Stomach (tissue), 19 donors: ENCODE measurements at regions of chr9 and their contacts with region 1.

Region 1: GRCh38 chr9:123349691-123350480 is 6.1 kb upstream of the CRB2 start:
- DNase-seq: peak; percentile 47 to 84
- H3K4me3 ChIP-seq: no peak overlapping the region
- H3K27ac ChIP-seq: no peak overlapping the region
- H3K4me1 ChIP-seq: peaks cover 0 to 16% (median 14%) of the 10 kb centered on the region in 4 donors
- H3K27me3 ChIP-seq: peaks cover 0 to 39% (median 14%) of the 10 kb centered on the region in 3 donors
- CTCF ChIP-seq: peak in 5 of 7 experiments; percentile 74 to 96 (median 91)
- EP300 ChIP-seq: no peak
- POLR2A ChIP-seq: no peak

Region 2: GRCh38 chr9:123102375-123103110 is 247.3 kb before region 1 on chr9:
- intact Hi-C with region 1: loop called (anchors 10 kb)
- DNase-seq: no peak
- H3K4me3 ChIP-seq: no peak overlapping the region
- H3K27ac ChIP-seq: no peak overlapping the region
- H3K4me1 ChIP-seq: peaks cover 0 to 8% (median 0%) of the 10 kb centered on the region in 4 donors
- H3K27me3 ChIP-seq: no peaks in the 10 kb centered on the region
- CTCF ChIP-seq: no peak
- EP300 ChIP-seq: no peak
- POLR2A ChIP-seq: no peak

Region 3: GRCh38 chr9:124174433-124174832 is 824.5 kb after region 1 on chr9:
- intact Hi-C with region 1: no loop called
- DNase-seq: no peak
- H3K4me3 ChIP-seq: no peak overlapping the region
- H3K27ac ChIP-seq: no peak overlapping the region
- H3K4me1 ChIP-seq: no peaks in the 10 kb centered on the region
- H3K27me3 ChIP-seq: no peaks in the 10 kb centered on the region
- CTCF ChIP-seq: no peak
- EP300 ChIP-seq: no peak
- POLR2A ChIP-seq: no peak